ENCODE measurements at regions of chr18 and their contacts with region 1.

Region 1: DNA sequence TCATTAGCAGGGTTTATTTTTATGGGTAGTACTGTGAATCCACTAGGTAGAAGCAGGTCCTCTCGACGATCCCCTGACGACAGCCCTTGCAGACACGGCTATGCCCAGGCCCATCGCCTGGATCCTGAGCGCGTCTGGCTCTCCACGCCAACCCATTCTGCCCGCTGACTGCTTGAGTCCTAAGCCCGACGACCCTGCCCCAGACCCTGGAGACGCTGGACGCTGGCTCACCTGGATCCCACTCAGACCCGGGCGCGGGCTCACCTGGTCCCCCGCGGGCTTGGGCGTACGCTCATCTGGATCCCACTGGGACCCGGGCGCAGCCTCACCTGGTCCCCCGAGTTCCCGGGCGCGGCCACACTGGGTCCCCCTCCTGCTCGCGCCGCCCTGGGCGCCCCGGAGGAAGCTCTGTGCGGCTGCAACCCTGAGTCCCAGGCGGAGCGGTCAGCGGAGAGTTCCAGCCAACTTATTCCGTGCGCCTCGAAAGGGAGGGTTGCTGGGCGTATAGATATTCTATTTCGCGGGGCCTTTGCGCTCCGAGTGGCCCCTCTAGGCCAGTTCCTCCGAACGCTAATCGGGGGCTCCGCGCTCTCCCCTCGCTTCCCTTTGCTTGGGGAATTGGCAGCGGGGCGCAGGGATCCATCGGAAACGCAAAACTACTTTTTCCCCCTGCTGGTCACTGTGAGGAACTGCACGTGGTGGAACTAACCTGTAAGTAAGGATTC is 22.4 kb upstream of the RMP24 start:
- DNase-seq: peak; percentile 55
- H3K4me3 Mint-ChIP-seq: peak overlapping the region; percentile 69
- H3K27ac Mint-ChIP-seq: no peak overlapping the region
- H3K4me1 Mint-ChIP-seq: peaks cover 3% of the 10 kb centered on the region
- H3K27me3 Mint-ChIP-seq: peaks cover 15% of the 10 kb centered on the region

Region 2: DNA sequence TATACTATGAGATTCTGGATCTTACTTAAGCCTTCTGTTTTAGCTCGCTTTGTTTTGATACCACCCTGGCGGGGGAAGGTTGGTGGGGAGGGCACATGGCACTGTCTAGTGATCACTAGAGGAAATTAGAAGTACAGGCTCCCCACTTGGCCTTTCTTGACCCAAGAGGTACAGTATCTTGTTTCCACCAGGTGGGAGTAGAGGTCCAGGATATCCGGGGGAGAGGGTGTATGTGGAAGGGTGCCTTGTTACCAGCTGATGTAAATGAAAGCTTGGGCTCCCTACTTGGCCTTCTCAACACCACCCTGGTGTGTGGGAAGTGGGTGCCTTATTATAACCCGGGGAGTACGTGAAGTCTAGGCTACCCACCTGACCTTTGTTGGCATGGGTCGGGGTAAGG is 361.1 kb before region 1 on chr18:
- CTCF ChIA-PET with region 1: no interaction called
- POLR2A ChIA-PET with region 1: no interaction called
- intact Hi-C with region 1: loop called (anchors 5 kb)
- DNase-seq: peak; percentile 40
- H3K4me3 Mint-ChIP-seq: no peak overlapping the region
- H3K27ac Mint-ChIP-seq: no peak overlapping the region
- H3K4me1 Mint-ChIP-seq: peaks cover 21% of the 10 kb centered on the region
- H3K27me3 Mint-ChIP-seq: no peaks in the 10 kb centered on the region

Region 3: GRCh38 chr18:35756506-35757117 is 193.5 kb before region 1 on chr18:
- CTCF ChIA-PET with region 1: interaction called, 23 read pairs
- POLR2A ChIA-PET with region 1: no interaction called
- intact Hi-C with region 1: loop called (anchors 1 kb)
- DNase-seq: peak; percentile 54
- H3K4me3 Mint-ChIP-seq: no peak overlapping the region
- H3K27ac Mint-ChIP-seq: no peak overlapping the region
- H3K4me1 Mint-ChIP-seq: no peaks in the 10 kb centered on the region
- H3K27me3 Mint-ChIP-seq: peaks cover 24% of the 10 kb centered on the region

Region 4: GRCh38 chr18:35938158-35938557 is 11.9 kb before region 1 on chr18:
- CTCF ChIA-PET with region 1: interaction called, 13 read pairs
- POLR2A ChIA-PET with region 1: no interaction called
- intact Hi-C with region 1: no loop called
- DNase-seq: no peak
- H3K4me3 Mint-ChIP-seq: no peak overlapping the region
- H3K27ac Mint-ChIP-seq: no peak overlapping the region
- H3K4me1 Mint-ChIP-seq: no peaks in the 10 kb centered on the region
- H3K27me3 Mint-ChIP-seq: peaks cover 2% of the 10 kb centered on the region